Heart right ventricle (tissue), 16 donors: ENCODE measurements at regions of chr3 and their contacts with region 1.

Region 1: DNA sequence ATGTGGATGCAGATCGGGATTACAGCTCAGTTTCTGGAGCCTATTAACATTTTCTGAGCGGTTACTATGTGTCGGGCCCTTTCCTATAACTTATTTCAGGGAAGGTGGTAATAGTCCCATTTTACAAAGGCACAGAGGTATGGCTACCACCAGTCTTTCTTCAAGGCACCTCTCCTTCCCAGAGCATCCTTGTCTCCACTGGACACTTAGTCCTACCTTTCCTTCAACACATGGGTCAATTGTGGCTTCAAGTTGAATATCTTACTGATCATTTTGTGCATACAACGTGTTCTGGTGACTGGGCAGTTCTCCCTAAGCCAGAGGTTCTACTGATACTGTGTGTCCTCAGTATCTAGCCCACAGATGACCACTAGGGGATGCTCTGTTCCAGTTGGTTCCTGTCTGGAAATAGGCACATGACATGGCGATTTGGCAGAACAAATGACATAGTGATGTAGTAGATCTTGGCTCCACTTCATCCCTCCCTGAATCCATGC is 60.7 kb upstream of the CMTM8 start:
- DNase-seq: peak in 1 of 2 donors; percentile 84
- ATAC-seq: peak; percentile 77 to 96 (median 89)
- H3K4me3 ChIP-seq: no peak overlapping the region
- H3K27ac ChIP-seq: no peak overlapping the region
- H3K4me1 ChIP-seq: peaks cover 2 to 14% (median 10%) of the 10 kb centered on the region in 9 donors
- H3K27me3 ChIP-seq: no peaks in the 10 kb centered on the region
- CTCF ChIP-seq: peak; percentile 53 to 85 (median 79)

Region 2: GRCh38 chr3:32238453-32239306 is 60.9 kb after region 1 on chr3 and contains the start of gene CMTM8:
- intact Hi-C with region 1: loop called in 5 of 10 experiments (anchors 1 to 10 kb)
- DNase-seq: peak; percentile 38 to 52
- ATAC-seq: peak; percentile 78 to 89 (median 83)
- H3K4me3 ChIP-seq: peak within 1 kb of the TSS; percentile 47 to 80 (median 68)
- H3K27ac ChIP-seq: peak within 1 kb of the TSS; percentile 77 to 96 (median 87)
- H3K4me1 ChIP-seq: peaks cover 0 to 28% (median 12%) of the 10 kb centered on the region in 9 donors
- H3K27me3 ChIP-seq: peaks cover 0 to 30% (median 0%) of the 10 kb centered on the region in 7 donors
- CTCF ChIP-seq: no peak
- total RNA-seq, gene CMTM8: 2.1 to 6.9 (median 3.4) TPM

Region 3: DNA sequence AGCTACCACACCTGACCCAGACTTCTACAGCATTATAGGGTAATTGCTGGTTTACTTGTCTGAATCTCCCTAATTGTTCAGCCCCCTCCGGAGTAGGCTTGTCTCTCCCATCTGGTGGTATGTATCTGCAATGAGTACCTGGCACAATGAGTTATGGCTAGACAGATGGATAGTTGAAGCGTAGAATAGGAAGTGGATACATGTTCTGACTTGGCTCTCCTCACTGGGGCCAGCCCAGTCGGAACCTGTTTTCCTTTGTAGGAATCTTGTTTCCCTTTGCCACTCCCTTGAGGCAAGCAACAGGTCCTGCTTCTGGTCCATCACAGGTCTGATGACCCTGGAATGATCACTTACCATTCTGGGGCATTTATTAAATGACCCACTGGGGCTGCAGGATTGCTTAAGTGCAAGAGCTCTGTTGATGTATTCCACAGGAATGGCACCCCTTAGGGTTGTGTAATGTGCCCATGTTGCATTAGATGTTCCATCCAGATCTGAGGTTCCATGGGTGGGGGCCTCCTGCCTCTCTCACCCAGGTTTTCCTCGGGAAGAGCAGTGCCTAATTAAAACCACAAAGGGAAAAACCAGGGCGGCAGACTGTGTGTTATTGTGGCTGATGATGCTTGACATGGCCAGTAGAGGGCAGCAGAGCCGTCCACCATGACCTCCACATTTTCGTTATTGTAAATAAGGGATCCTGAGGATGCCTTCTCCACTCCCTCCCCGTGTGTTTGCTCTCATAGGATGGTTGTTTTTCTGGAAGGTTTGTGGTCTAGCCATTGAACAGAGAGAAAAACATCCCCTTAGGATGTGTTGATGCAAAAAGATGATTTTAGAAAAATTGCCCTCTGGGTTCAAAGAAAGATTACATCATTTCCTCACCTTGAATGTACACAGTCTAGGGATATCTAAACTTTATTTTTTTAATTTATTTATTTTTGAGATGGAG is 118.8 kb after region 1 on chr3:
- intact Hi-C with region 1: loop called in 5 of 10 experiments (anchors 5 kb)
- DNase-seq: peak; percentile 46 to 56
- ATAC-seq: peak; percentile 70 to 91 (median 82)
- H3K4me3 ChIP-seq: no peak overlapping the region
- H3K27ac ChIP-seq: no peak overlapping the region
- H3K4me1 ChIP-seq: peaks cover 0 to 14% (median 4%) of the 10 kb centered on the region in 9 donors
- H3K27me3 ChIP-seq: no peaks in the 10 kb centered on the region
- CTCF ChIP-seq: peak; percentile 72 to 96 (median 90)

Region 4: GRCh38 chr3:32340039-32340438 is 162.3 kb after region 1 on chr3:
- intact Hi-C with region 1: loop called (anchors 1 to 10 kb)
- DNase-seq: peak in 1 of 2 donors; percentile 17
- ATAC-seq: peak; percentile 55 to 86 (median 81)
- H3K4me3 ChIP-seq: no peak overlapping the region
- H3K27ac ChIP-seq: no peak overlapping the region
- H3K4me1 ChIP-seq: peaks cover 0 to 24% (median 5%) of the 10 kb centered on the region in 9 donors
- H3K27me3 ChIP-seq: no peaks in the 10 kb centered on the region
- CTCF ChIP-seq: peak; percentile 14 to 69 (median 60)

Region 5: DNA sequence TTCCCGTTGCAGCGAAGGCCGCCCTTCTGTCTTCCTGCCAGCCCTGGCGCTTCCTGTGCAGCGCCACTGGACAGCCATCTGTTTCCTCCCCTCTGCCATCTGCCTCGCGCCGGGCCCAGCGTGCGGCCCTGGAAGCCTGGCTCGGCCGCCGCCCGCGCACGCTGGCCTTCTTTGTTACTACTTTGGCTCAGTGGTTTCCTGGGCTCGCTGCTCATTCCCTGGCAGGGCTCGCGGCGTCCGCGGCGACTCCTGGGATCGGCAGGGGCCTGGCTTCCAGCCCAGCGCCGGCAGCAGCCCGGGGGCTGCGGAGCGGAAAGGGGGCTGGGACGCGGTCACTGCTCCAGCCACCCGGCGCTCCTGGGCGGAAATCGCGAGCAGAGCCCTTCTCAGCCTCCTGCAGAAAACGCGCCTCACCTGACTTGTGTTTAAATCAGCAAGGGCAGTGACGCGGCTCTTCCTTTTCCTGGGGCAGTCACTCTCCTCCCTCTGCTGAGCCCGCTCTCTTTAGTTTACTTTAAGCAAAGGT is 223.9 kb after region 1 on chr3:
- intact Hi-C with region 1: loop called in 4 of 10 experiments (anchors 5 to 10 kb)
- DNase-seq: peak; percentile 83 to 85
- ATAC-seq: peak; percentile 85 to 93 (median 90)
- H3K4me3 ChIP-seq: peak overlapping the region; percentile 7 to 61 (median 54)
- H3K27ac ChIP-seq: peak overlapping the region; percentile 62 to 95 (median 86)
- H3K4me1 ChIP-seq: peaks cover 4 to 88% (median 34%) of the 10 kb centered on the region in 9 donors
- H3K27me3 ChIP-seq: no peaks in the 10 kb centered on the region
- CTCF ChIP-seq: peak in 2 of 9 donors; percentile 8 to 12

Region 6: DNA sequence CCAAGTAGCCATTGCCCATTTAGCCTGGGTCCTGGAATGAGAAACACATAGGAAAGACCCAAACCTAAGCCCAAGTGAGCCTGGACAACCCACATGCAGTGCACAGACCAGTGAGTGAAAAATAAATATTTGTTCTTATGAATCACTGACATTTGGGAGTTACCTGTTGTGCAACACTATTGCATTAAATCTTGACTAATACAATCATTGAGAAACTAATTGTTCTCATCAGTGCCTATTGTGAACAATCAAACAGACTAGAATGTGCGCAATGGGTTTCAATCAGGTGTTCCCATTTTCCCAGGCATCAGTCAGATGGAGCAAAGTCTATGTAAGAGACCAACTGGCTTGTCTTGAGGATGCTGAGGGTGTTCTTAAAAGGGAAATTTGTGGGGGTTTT is 452.5 kb after region 1 on chr3:
- intact Hi-C with region 1: no loop called
- DNase-seq: no peak
- ATAC-seq: no peak
- H3K4me3 ChIP-seq: no peak overlapping the region
- H3K27ac ChIP-seq: no peak overlapping the region
- H3K4me1 ChIP-seq: no peaks in the 10 kb centered on the region
- H3K27me3 ChIP-seq: no peaks in the 10 kb centered on the region
- CTCF ChIP-seq: no peak

Region 7: DNA sequence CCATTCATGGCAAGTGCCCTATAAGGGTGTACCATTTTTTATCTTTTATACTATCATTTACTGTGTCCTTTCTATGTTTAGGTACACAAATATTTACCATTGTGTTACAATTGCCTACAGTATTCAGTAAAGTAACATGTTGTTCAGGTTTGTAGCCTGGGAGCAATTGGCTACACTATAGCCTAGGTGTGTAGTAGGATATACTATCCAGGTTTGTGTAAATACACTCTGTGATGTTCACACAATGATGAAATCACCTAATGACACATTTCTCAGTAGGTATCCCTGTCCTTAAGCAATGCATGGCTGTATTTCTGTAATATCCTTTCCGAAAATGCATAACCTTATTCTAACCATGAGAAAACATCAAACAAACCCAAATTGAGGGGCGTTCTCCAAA is 489.4 kb after region 1 on chr3:
- intact Hi-C with region 1: loop called in 1 of 10 experiments (anchors 10 kb)
- DNase-seq: no peak
- ATAC-seq: no peak
- H3K4me3 ChIP-seq: no peak overlapping the region
- H3K27ac ChIP-seq: no peak overlapping the region
- H3K4me1 ChIP-seq: no peaks in the 10 kb centered on the region
- H3K27me3 ChIP-seq: peaks cover 0 to 6% (median 0%) of the 10 kb centered on the region in 7 donors
- CTCF ChIP-seq: no peak